ENCODE measurements at regions of chrX and their contacts with region 1.

Region 1: DNA sequence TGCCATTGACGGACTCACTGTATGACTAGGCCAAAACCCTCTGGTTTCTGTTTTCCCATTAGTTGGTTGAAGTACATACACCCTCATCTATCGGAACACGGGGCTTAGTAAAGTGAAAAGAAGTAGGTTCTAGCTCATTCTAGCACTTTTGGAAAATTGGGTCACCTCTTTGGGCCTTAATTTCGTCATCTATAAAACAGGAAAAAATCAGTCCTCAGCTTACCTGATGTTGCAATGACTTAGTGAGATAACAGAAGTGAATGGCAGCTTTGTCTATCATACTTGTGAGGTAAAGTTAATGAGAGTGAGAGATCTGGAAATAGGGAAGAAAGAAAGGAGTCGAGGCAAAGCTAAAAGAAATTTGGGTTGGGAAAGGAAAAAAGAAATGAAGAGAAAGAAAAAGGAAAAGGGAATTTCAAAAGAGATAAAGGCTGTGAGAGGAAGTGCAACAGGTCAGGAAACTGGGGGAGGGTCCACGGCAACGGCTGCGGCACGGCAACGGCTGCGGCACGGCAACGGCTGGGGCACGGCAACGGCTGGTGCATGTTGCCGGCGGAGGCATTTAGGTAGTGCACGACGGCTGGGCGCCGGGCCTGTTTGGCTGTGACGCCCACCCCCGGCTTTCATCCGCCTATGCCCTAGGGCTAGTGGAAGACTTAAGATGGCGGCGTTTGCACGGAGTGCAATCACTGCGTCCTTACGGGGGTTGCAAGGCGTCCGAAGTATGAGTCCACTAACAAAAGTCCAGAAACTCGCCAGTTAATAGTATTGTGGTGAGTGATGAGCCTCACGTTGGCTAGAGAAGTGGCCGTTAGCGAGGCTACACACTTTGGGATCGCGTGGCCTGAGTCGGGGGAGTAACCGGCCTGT is 360.1 kb upstream of the ZCCHC13 start:
- DNase-seq: peak; percentile 86
- H3K4me3 ChIP-seq: peak overlapping the region; percentile 89 to 95 (median 95)
- H3K27ac ChIP-seq: peak overlapping the region; percentile 89
- H3K4me1 ChIP-seq: peaks cover 10% of the 10 kb centered on the region
- H3K27me3 ChIP-seq: no peaks in the 10 kb centered on the region
- CTCF ChIP-seq: no peak

Region 2: DNA sequence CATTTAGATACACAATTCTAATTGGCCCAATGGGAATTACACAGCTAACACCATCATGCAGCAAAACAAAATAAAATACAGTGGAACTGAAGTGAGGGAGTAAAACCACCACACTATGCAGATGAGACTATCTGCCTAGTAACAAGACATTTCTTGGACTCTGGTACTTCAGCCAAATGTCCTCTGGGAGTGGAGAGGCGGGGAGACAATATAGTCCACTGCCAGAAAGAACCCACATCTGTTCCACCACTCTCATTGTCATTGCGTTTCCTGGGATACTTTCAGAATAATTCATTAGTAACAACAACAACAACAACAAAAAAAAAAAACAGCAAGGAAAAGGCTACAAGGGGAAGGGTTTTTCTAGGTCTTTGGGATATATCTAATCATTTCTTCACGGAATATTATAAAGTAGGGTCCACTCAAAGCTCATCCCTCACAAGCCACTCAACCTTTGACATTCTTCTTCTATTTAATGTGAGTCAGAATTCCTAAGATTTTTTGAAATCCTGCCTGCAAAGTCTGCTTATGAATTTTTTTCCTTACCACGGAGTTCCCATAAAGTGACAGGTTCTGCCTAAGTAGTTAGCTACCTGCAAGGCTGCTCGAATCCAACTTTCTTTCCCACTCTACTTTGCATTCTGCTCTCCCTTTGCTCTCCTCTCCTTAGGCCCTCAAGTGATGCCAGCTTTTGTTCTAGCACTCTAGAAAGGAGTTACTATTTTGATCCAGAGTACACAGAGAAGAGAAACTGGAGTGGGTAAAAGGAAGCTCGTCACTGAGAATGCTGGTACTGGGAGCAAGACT is 126.3 kb before region 1 on chrX:
- CTCF ChIA-PET with region 1: no interaction called
- dilution Hi-C with region 1: no loop called
- in situ Hi-C with region 1: no loop called
- intact Hi-C with region 1: no loop called
- DNase-seq: no peak
- H3K4me3 ChIP-seq: no peak overlapping the region
- H3K27ac ChIP-seq: no peak overlapping the region
- H3K4me1 ChIP-seq: no peaks in the 10 kb centered on the region
- H3K27me3 ChIP-seq: no peaks in the 10 kb centered on the region
- CTCF ChIP-seq: no peak

Region 3: GRCh38 chrX:73855546-73855945 is 88.4 kb before region 1 on chrX:
- CTCF ChIA-PET with region 1: no interaction called
- dilution Hi-C with region 1: no loop called
- in situ Hi-C with region 1: no loop called
- intact Hi-C with region 1: loop called (anchors 1 kb)
- DNase-seq: peak; percentile 60
- H3K4me3 ChIP-seq: no peak overlapping the region
- H3K27ac ChIP-seq: no peak overlapping the region
- H3K4me1 ChIP-seq: no peaks in the 10 kb centered on the region
- H3K27me3 ChIP-seq: no peaks in the 10 kb centered on the region
- CTCF ChIP-seq: peak; percentile 85 to 88

Region 4: DNA sequence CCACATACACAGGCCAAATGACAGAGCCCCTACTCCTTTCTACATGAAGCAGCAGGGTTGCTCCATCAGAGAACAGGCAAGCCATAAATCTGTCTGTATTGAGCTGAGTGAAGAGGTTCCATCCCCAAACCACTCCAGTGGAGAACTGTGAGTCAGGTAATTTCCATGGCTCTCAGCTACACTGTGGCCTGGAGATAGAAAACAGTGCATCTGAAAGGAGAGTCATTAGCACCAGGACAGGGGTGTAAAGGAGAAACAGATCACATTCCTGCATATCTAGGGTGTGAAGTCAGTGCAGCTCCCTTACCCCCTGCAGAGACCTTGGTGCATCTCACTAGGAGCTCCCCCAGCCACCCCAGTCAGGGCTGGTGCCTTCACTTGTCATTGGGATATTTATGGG is 66.2 kb before region 1 on chrX:
- CTCF ChIA-PET with region 1: no interaction called
- dilution Hi-C with region 1: no loop called
- in situ Hi-C with region 1: no loop called
- intact Hi-C with region 1: loop called (anchors 2 kb)
- DNase-seq: no peak
- H3K4me3 ChIP-seq: no peak overlapping the region
- H3K27ac ChIP-seq: no peak overlapping the region
- H3K4me1 ChIP-seq: peaks cover 19% of the 10 kb centered on the region
- H3K27me3 ChIP-seq: no peaks in the 10 kb centered on the region
- CTCF ChIP-seq: no peak

Region 5: GRCh38 chrX:73916931-73917667 is 26.8 kb before region 1 on chrX:
- CTCF ChIA-PET with region 1: no interaction called
- dilution Hi-C with region 1: no loop called
- in situ Hi-C with region 1: no loop called
- intact Hi-C with region 1: loop called (anchors 1 kb)
- DNase-seq: peak; percentile 77
- H3K4me3 ChIP-seq: no peak overlapping the region
- H3K27ac ChIP-seq: peak overlapping the region; percentile 60
- H3K4me1 ChIP-seq: peaks cover 30% of the 10 kb centered on the region
- H3K27me3 ChIP-seq: no peaks in the 10 kb centered on the region
- CTCF ChIP-seq: no peak

Region 6: GRCh38 chrX:73992019-73992418 is 48.1 kb after region 1 on chrX:
- CTCF ChIA-PET with region 1: no interaction called
- dilution Hi-C with region 1: loop called (anchors 5 kb)
- in situ Hi-C with region 1: no loop called
- intact Hi-C with region 1: no loop called
- DNase-seq: no peak
- H3K4me3 ChIP-seq: no peak overlapping the region
- H3K27ac ChIP-seq: no peak overlapping the region
- H3K4me1 ChIP-seq: no peaks in the 10 kb centered on the region
- H3K27me3 ChIP-seq: no peaks in the 10 kb centered on the region
- CTCF ChIP-seq: no peak

Region 7: GRCh38 chrX:74049141-74049540 is 105.2 kb after region 1 on chrX:
- CTCF ChIA-PET with region 1: no interaction called
- dilution Hi-C with region 1: loop called (anchors 5 kb)
- in situ Hi-C with region 1: no loop called
- intact Hi-C with region 1: no loop called
- DNase-seq: no peak
- H3K4me3 ChIP-seq: no peak overlapping the region
- H3K27ac ChIP-seq: no peak overlapping the region
- H3K4me1 ChIP-seq: no peaks in the 10 kb centered on the region
- H3K27me3 ChIP-seq: no peaks in the 10 kb centered on the region
- CTCF ChIP-seq: no peak

Region 8: DNA sequence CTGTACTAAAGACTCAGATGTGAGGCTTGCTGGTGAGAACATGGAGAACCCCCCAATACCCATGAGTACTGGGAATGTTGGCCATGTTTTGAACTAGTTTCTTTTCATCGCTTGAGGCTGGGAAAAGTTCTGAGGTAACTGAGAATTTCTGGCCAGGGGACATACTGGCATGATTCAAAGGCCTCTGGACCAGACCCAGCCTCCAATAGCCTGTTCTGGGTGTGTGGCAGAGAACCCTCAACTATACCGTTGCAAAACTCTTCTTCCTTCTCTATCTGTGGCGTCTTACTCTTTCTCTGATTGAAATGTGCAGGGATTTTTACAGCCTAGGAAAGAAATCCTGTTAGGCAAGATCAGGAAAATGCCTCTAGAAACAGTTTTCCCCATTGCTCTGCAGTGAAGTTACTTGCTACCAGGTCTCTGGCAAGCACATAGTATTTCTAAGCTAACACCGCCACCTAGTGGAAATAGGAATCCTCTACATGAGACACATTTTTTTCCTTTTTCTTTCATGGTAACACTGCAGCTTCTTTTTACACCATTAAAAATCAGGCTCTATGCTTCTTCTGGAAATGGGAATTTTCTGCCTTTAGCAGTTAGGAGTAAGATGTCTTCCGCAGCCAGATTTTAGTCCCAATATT is 189.3 kb after region 1 on chrX:
- CTCF ChIA-PET with region 1: no interaction called
- dilution Hi-C with region 1: no loop called
- in situ Hi-C with region 1: no loop called
- intact Hi-C with region 1: loop called (anchors 2 kb)
- DNase-seq: peak; percentile 40
- H3K4me3 ChIP-seq: no peak overlapping the region
- H3K27ac ChIP-seq: no peak overlapping the region
- H3K4me1 ChIP-seq: no peaks in the 10 kb centered on the region
- H3K27me3 ChIP-seq: no peaks in the 10 kb centered on the region
- CTCF ChIP-seq: peak; percentile 68 to 74

Measured in mammary epithelial cell (primary cell).